ENCODE measurements at regions of chr5 and their contacts with region 1.

Region 1: GRCh38 chr5:58886315-58887207 is 303.7 kb downstream of the RAB3C start:
- DNase-seq: peak; percentile 56 to 79
- ATAC-seq: peak; percentile 82 to 92 (median 84)
- H3K4me3 ChIP-seq: no peak overlapping the region
- H3K27ac ChIP-seq: peak overlapping the region; percentile 33
- H3K4me1 ChIP-seq: peaks cover 12% of the 10 kb centered on the region
- H3K27me3 ChIP-seq: no peaks in the 10 kb centered on the region
- CTCF ChIP-seq: peak; percentile 93

Region 2: DNA sequence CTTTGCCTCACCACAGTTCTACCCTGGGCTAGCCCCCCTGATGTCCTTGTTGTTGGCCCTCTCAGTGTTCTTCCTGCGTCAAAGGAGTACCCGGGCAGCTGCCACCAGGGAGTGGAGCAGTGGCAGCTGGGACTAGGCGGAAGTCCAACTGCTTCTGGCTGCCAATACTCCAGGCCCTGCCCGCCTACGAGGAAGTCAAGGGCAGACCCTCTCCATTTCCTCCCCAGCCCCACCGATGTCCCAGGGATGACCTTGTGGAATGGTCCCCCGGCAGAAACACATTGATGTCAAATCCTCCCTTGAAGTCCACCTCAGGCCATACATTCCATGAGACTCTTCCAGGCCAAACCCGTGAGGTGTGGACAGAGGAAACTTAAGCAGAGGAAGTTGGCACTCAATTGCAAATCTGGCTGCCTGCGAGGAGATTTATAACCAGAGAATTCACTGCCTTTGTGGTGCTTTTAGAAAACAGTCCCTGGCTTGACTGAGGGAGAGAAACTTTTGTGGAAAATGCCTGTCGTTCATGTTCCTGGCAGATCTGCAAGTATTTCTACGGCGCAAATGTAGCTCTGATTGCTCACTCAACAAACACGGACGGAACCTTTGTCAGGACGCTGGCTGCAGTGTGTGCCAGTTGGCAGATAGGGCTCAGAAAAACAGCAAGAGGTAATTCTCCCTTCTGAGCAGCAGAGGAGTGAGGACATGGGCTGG is 36.1 kb after region 1 on chr5:
- intact Hi-C with region 1: loop called in 1 of 2 experiments (anchors 5 kb)
- DNase-seq: peak; percentile 84 to 93
- ATAC-seq: peak; percentile 92 to 95 (median 94)
- H3K4me3 ChIP-seq: peak overlapping the region; percentile 54
- H3K27ac ChIP-seq: peak overlapping the region; percentile 96
- H3K4me1 ChIP-seq: peaks cover 52% of the 10 kb centered on the region
- H3K27me3 ChIP-seq: no peaks in the 10 kb centered on the region
- CTCF ChIP-seq: no peak

Region 3: GRCh38 chr5:58961631-58962280 is 75.2 kb after region 1 on chr5:
- intact Hi-C with region 1: loop called (anchors 5 to 10 kb)
- DNase-seq: no peak
- ATAC-seq: no peak
- H3K4me3 ChIP-seq: no peak overlapping the region
- H3K27ac ChIP-seq: no peak overlapping the region
- H3K4me1 ChIP-seq: no peaks in the 10 kb centered on the region
- H3K27me3 ChIP-seq: no peaks in the 10 kb centered on the region
- CTCF ChIP-seq: no peak

Region 4: DNA sequence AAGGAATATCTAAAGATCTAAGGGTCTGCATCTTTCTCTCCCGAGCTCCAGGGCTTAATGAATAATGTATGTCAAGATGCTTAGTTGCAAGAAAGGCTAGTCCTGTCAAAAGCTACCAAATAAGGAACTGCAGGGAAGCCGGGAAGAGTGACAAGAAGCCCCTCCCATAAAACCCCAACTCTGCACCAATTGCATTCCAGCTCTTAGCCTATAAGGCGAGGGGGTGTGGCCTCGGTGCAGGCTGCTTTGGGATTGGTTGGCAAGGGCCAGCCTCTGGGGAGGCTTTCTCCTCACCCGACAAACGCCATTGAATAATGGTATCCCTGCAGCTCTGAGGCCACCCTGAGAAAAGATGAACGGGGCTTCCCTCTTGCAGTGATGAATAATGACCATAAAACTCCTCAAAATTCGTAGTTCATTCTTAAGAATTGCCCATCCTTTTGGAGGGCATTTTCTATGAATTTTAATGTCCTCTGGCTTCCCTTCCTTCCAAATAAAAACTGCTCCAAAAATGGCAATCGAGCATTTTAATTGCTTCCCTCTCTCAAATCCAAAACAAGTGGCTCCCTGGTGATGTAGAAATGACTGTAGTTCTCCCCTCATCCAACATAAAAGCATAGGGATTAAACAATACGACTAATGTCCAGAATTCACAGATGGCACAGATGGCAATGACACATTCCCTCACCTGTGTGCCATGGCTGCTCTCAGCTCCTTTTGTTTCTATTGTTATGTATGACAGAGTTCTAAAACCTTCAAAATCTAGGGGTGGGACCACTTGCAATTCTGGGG is 113.4 kb after region 1 on chr5:
- intact Hi-C with region 1: loop called (anchors 5 kb)
- DNase-seq: no peak
- ATAC-seq: peak in 1 of 4 donors; percentile 21
- H3K4me3 ChIP-seq: no peak overlapping the region
- H3K27ac ChIP-seq: peak overlapping the region; percentile 76
- H3K4me1 ChIP-seq: peaks cover 46% of the 10 kb centered on the region
- H3K27me3 ChIP-seq: no peaks in the 10 kb centered on the region
- CTCF ChIP-seq: no peak

Region 5: DNA sequence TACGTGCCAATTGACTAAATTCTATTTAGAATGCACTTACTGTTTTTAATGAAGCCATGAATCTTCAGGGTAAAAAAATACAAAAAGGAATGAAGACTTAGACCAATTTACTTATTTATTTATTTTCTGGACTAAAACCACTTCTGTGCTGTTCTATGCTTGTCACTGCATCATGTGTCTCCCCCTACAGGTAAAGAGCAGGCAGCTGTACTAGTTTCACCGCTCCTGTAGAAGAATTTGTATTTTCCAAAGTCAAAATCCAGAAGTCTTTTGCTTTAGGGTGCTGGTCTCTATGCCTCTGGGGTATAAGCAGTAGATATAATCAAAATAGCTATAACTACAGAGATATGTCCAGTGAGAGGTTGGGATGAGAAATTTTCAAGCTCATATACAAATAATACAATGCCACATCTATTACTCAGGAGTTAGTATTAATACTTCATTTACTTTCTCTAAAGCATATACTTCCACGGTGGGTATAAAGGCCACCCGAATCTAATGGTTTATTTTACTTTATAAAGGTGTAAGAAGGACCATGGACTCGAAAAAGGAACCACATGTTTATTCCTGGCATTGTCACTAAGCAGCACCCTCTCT is 287.8 kb after region 1 on chr5:
- intact Hi-C with region 1: loop called (anchors 5 to 10 kb)
- DNase-seq: no peak
- ATAC-seq: peak; percentile 34 to 64 (median 52)
- H3K4me3 ChIP-seq: no peak overlapping the region
- H3K27ac ChIP-seq: peak overlapping the region; percentile 12
- H3K4me1 ChIP-seq: peaks cover 31% of the 10 kb centered on the region
- H3K27me3 ChIP-seq: no peaks in the 10 kb centered on the region
- CTCF ChIP-seq: peak; percentile 79

Region 6: DNA sequence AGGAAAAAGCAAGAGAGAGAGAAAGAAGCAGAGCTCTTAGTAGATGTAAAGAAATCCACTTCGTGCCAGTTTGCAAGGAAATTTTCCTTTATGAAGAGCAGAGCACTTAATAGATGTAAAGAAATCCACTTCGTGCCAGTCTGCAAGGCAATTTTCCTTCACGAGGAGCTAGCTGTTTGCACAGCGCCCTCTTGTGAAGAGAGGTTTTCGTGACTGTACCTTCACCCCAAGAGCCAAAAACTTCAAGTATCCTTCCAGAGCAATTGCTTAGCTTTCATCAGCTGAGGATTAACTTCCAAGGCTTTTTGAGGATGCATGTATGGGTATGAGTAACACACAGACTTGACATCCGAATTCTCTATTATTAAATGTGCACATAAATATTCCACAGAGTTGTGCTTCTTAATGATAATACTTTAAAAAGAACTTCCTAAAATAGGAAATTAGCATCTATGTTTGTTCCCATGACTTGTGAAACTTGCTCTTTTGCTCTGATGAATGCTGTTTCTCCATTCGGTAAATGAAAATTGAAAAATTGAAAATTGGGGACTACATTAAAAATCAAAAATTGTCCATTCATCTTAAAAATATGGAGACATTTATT is 481.3 kb after region 1 on chr5:
- intact Hi-C with region 1: loop called in 1 of 2 experiments (anchors 10 kb)
- DNase-seq: peak; percentile 35 to 54
- ATAC-seq: peak; percentile 60 to 77 (median 66)
- H3K4me3 ChIP-seq: no peak overlapping the region
- H3K27ac ChIP-seq: peak overlapping the region; percentile 95
- H3K4me1 ChIP-seq: peaks cover 45% of the 10 kb centered on the region
- H3K27me3 ChIP-seq: no peaks in the 10 kb centered on the region
- CTCF ChIP-seq: peak; percentile 82

Region 7: DNA sequence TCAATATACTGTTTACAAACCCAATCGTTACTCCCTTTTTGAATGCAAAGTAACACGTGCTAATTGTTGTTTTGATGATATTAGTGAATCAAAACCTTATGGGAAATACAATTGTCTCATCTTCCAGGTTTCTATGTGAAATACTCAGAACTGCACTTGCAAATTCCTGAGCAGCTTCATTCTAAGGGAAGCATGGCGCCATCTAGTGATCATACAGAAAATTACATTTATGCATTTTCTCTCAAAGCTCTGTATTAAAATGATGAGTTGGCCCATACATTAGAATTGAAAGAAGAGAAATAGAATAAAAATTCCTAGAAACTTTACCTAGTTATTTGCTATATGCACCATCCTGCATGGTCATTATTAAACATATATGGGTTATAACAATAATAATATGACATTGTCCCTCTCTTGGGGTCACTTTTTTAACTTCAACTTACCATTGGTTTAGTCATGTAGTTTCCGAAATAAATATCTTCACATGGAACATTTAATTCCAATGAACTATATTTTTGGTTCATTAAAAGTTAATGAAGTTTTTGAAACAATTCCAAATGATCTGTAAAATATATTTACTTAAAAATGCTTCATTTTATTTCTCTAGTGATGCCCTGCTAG is 787.0 kb after region 1 on chr5:
- intact Hi-C with region 1: loop called in 1 of 2 experiments (anchors 10 kb)
- DNase-seq: no peak
- ATAC-seq: peak; percentile 30 to 80 (median 60)
- H3K4me3 ChIP-seq: no peak overlapping the region
- H3K27ac ChIP-seq: no peak overlapping the region
- H3K4me1 ChIP-seq: peaks cover 12% of the 10 kb centered on the region
- H3K27me3 ChIP-seq: no peaks in the 10 kb centered on the region
- CTCF ChIP-seq: peak; percentile 89